Tibial artery (tissue), 4 donors: ENCODE measurements at regions of chr16 and their contacts with region 1.

Region 1: GRCh38 chr16:11742539-11743307 is at the start of gene TXNDC11:
- DNase-seq: peak; percentile 99 to 100
- H3K4me3 ChIP-seq: peak within 1 kb of the TSS; percentile 85 to 92
- H3K27ac ChIP-seq: peak within 1 kb of the TSS; percentile 95 to 97
- H3K4me1 ChIP-seq: peaks cover 0 to 42% (median 23%) of the 10 kb centered on the region in 4 donors
- H3K27me3 ChIP-seq: no peaks in the 10 kb centered on the region
- CTCF ChIP-seq: peak in 1 of 2 experiments; percentile 9

Region 2: GRCh38 chr16:11181899-11182279 is 560.8 kb before region 1 on chr16:
- intact Hi-C with region 1: no loop called
- DNase-seq: no peak
- H3K4me3 ChIP-seq: no peak overlapping the region
- H3K27ac ChIP-seq: no peak overlapping the region
- H3K4me1 ChIP-seq: peaks cover 0 to 18% (median 0%) of the 10 kb centered on the region in 4 donors
- H3K27me3 ChIP-seq: no peaks in the 10 kb centered on the region
- CTCF ChIP-seq: no peak

Region 3: GRCh38 chr16:11797166-11797956 is 54.6 kb after region 1 on chr16 and contains the start of gene ZC3H7A:
- intact Hi-C with region 1: loop called (anchors 1 kb)
- DNase-seq: peak; percentile 96 to 98
- H3K4me3 ChIP-seq: peak within 1 kb of the TSS; percentile 87 to 92
- H3K27ac ChIP-seq: peak within 1 kb of the TSS; percentile 96 to 97
- H3K4me1 ChIP-seq: peaks cover 0 to 65% (median 50%) of the 10 kb centered on the region in 4 donors
- H3K27me3 ChIP-seq: no peaks in the 10 kb centered on the region
- CTCF ChIP-seq: peak; percentile 72 to 99

Region 4: GRCh38 chr16:11890231-11890965 is 147.7 kb after region 1 on chr16:
- intact Hi-C with region 1: no loop called
- DNase-seq: no peak
- H3K4me3 ChIP-seq: no peak overlapping the region
- H3K27ac ChIP-seq: no peak overlapping the region
- H3K4me1 ChIP-seq: no peaks in the 10 kb centered on the region
- H3K27me3 ChIP-seq: no peaks in the 10 kb centered on the region
- CTCF ChIP-seq: no peak